Cardiac septum (tissue), 1 donor: ENCODE measurements at regions of chr11 and their contacts with region 1.

Region 1: GRCh38 chr11:68297812-68298658 is 14.4 kb upstream of the LRP5 start:
- DNase-seq: peak; percentile 92

Region 2: DNA sequence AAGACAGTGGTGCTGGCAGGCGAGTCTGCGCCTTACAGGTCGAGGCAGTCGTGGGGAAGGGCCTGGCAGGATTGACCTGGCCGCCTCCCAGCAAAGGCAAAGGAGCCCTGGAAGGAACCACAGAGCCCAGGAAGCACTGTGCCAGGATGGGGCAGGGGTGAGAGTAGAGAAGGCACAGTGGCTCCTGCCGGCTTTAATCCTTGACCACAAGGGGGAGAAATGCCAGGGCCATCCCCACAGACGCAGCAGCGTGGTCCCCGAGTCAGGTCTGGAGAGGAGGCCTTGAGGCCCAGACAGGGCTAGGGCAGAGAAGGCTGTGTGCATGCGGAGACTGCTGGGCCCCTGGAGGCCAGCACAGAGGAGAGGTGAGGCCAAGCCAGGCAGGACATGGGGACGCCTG is 277.5 kb before region 1 on chr11:
- intact Hi-C with region 1: no loop called
- DNase-seq: no peak

Region 3: GRCh38 chr11:68206187-68206601 is 91.8 kb before region 1 on chr11:
- intact Hi-C with region 1: loop called (anchors 5 kb)
- DNase-seq: no peak

Region 4: DNA sequence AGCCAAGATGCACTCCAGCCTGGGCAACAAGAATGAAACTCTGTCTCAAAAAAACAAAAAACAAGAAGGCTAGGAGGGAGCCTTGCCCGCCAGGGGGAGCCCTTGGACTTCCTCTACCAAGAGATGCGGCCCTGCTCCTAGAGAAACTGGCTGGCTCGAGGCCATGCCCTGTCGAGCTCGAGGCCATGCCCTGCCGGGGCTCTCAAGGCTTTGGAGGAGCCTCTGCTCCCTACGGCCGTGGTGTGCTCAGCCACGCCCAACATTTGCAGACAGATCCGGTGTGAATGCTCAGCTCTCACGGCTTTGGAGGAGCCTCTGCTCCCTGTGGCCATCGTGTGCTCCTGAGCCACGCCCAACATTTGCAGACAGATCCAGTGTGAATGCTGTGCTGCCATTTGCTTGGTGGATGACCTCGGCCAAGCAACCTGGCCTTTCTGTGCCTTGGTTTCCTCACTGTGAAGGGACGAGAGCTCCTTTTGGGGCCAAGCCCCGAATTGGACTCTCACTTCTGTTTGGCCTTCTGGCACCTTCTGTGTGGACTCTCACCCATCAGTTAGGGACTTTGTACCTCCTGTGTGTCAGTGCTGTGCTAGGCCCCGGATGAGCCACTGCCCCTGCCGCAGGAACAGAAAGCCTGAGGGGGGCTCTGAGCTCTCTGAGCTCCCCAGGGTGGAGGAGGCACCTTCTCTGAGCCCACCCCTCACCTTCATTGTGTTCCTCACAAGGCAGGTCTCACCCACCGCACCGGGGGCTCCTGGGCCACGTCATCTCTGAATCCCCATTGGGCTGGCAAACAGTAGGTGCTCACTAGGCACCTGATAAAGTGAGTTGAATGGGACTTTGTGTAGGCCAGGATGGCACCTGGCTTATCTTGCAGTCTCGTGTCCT is 40.3 kb before region 1 on chr11:
- intact Hi-C with region 1: loop called (anchors 1 kb)
- DNase-seq: peak; percentile 96

Region 5: GRCh38 chr11:68383976-68384501 is 86.0 kb after region 1 on chr11:
- intact Hi-C with region 1: loop called (anchors 5 kb)
- DNase-seq: peak; percentile 87

Region 6: DNA sequence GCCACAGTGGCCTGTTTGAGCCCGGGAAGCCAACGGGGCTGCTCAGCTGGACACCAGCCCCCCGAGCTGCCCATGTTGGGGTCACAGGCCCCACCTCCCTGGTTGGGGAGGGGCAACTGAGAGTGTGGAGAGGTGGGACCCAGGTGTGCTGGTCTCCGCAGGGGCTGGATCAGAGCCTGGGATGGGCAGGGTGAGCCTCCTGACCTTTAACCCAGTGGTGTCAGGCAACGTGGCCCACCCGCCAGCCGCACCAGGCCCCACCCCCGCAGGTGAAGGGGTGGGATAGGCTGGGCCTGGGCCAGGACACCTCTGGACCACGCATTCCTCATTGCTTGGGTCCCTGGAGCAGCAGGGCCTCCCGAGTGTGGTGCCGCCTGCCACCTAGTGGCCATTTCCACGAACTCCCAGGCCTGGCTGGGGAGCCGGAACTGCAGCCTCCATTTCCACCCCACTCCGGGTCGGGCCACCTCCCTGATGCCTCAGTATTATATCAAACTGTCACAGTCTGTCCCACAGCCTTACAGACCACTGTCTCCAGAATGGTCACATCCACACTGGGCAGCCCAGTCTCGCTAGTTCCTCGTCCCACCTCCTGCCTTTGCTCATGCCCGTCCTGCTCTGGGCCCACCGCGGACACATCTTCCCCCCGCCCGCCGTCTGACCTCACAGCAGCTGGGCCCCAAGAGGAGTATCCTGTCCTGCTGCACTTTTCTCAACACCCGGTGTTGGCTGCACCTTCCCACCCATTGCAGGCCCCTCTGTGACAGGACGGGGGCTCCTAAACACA is 149.2 kb after region 1 on chr11:
- intact Hi-C with region 1: loop called (anchors 5 kb)
- DNase-seq: peak; percentile 92

Region 7: DNA sequence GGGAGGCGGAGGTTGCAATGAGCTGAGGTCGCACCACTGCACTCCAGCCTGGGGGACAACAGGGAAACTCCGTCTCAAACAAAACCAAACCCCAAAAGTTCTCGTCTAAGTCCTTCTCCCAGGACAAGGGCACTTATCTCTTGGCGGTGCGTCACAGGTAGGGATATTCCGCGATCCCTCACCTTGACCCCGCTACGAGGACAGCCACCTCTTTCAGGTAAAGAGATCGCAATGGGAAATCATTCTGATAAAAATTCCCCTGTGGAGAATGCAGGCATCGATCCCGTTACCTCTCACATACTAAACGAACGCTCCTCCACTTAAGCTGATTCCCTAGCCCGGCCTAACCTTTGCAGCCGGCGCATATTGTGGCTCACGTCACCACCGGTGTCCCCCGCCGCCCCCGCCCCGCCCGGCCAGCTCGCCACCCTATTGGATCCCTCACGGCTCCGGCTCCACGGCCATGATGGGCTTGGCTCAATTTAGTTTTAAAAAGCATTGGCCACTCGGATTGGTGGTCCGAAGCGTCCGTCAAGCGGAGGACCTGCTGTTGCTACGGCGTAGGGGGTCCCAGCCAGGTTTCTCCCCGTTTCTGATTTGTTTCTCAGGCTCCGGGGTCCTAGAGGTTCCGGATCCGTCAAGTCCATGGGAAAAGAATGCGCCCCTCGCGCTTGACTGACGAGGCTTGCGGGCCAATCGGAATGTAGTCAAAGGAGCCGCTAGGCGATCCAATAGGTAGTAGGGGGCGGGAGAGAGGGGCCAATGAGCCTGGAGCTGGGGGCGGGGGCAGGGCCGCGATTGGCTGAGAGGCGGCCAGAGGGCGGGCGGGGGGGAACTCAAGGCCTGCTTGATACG is 162.1 kb after region 1 on chr11:
- intact Hi-C with region 1: no loop called
- DNase-seq: peak; percentile 98